ENCODE measurements at regions of chr1 and their contacts with region 1.

Region 1: DNA sequence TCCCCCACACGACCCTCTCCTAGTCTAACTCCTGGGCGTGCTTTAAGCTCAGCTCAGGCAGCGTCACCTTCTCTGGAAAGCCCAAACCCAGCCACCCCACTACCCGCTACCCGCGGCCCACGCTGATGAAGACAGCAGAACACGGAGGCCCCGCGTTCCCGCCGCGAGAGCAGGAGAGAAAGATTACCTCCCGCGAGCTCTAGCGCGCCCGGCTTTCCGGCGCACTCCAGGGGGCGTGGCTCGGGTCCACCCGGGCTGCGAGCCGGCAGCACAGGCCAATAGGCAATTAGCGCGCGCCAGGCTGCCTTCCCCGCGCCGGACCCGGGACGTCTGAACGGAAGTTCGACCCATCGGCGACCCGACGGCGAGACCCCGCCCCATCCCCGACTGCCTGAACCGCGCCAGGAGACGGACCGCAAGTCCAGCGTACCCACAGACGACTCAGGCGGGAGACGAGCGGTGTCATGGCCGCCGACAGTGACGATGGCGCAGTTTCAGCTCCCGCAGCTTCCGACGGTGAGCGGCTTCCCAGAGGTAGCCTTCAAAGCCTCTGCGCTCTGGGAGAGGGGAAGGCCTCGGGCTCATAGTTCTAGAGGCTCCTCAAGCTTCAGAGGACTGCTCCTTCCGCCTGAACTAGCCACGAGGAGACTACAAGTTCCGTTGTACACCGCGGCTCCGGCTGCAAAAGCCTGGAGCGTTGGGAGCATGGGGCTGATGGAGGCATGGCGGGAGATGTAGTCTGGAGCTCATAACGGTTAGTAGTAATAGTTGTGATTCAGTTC is at the starts of genes MUTYH and TOE1:
- DNase-seq: peak; percentile 94
- H3K4me3 Mint-ChIP-seq: peak within 1 kb of the TSS; percentile 99
- H3K27ac Mint-ChIP-seq: peak within 1 kb of the TSS; percentile 100
- H3K4me1 Mint-ChIP-seq: peaks cover 39% of the 10 kb centered on the region
- H3K27me3 Mint-ChIP-seq: no peaks in the 10 kb centered on the region
- total RNA-seq, gene MUTYH: 53.4 and 55.9 TPM in 2 replicates
- total RNA-seq, gene TOE1: 39.1 and 41.4 TPM in 2 replicates

Region 2: GRCh38 chr1:44985747-44986359 is 354.1 kb before region 1 on chr1:
- intact Hi-C with region 1: loop called (anchors 1 kb)
- DNase-seq: no peak
- H3K4me3 Mint-ChIP-seq: peak overlapping the region; percentile 100
- H3K27ac Mint-ChIP-seq: peak overlapping the region; percentile 94
- H3K4me1 Mint-ChIP-seq: peaks cover 21% of the 10 kb centered on the region
- H3K27me3 Mint-ChIP-seq: peaks cover 2% of the 10 kb centered on the region

Region 3: GRCh38 chr1:45326627-45327623 is 13.1 kb before region 1 on chr1 and contains the start of gene HPDL:
- intact Hi-C with region 1: loop called (anchors 1 kb)
- DNase-seq: peak; percentile 35
- H3K4me3 Mint-ChIP-seq: peak within 1 kb of the TSS; percentile 81
- H3K27ac Mint-ChIP-seq: peak within 1 kb of the TSS; percentile 63
- H3K4me1 Mint-ChIP-seq: peaks cover 15% of the 10 kb centered on the region
- H3K27me3 Mint-ChIP-seq: peaks cover 5% of the 10 kb centered on the region
- total RNA-seq, gene HPDL: 31.0 and 34.8 TPM in 2 replicates

Region 4: GRCh38 chr1:45370575-45370974 is 30.6 kb after region 1 on chr1:
- intact Hi-C with region 1: no loop called
- DNase-seq: no peak
- H3K4me3 Mint-ChIP-seq: no peak overlapping the region
- H3K27ac Mint-ChIP-seq: no peak overlapping the region
- H3K4me1 Mint-ChIP-seq: no peaks in the 10 kb centered on the region
- H3K27me3 Mint-ChIP-seq: no peaks in the 10 kb centered on the region

Region 5: GRCh38 chr1:45499415-45499769 is 159.4 kb after region 1 on chr1:
- intact Hi-C with region 1: loop called (anchors 1 kb)
- DNase-seq: no peak
- H3K4me3 Mint-ChIP-seq: peak overlapping the region; percentile 93
- H3K27ac Mint-ChIP-seq: peak overlapping the region; percentile 83
- H3K4me1 Mint-ChIP-seq: peaks cover 37% of the 10 kb centered on the region
- H3K27me3 Mint-ChIP-seq: no peaks in the 10 kb centered on the region

Region 6: GRCh38 chr1:45550401-45551351 is 210.7 kb after region 1 on chr1 and contains the start of gene AKR1A1:
- intact Hi-C with region 1: loop called (anchors 1 kb)
- DNase-seq: peak; percentile 85
- H3K4me3 Mint-ChIP-seq: peak within 1 kb of the TSS; percentile 93
- H3K27ac Mint-ChIP-seq: peak within 1 kb of the TSS; percentile 92
- H3K4me1 Mint-ChIP-seq: peaks cover 29% of the 10 kb centered on the region
- H3K27me3 Mint-ChIP-seq: peaks cover 5% of the 10 kb centered on the region
- total RNA-seq, gene AKR1A1: 192 and 194 TPM in 2 replicates

Region 7: GRCh38 chr1:46247436-46248121 is 907.6 kb after region 1 on chr1 and contains the start of gene RAD54L:
- intact Hi-C with region 1: loop called (anchors 1 kb)
- DNase-seq: peak; percentile 95
- H3K4me3 Mint-ChIP-seq: peak within 1 kb of the TSS; percentile 97
- H3K27ac Mint-ChIP-seq: peak within 1 kb of the TSS; percentile 94
- H3K4me1 Mint-ChIP-seq: peaks cover 39% of the 10 kb centered on the region
- H3K27me3 Mint-ChIP-seq: no peaks in the 10 kb centered on the region
- total RNA-seq, gene RAD54L: 49.7 and 50.2 TPM in 2 replicates

Measured in activated T-helper 1 cell treated with anti-CD3 and anti-CD28 coated beads, Interleukin-12 subunit alpha, Interleukin-12 subunit beta, Interleukin-2, Interleukin-4 antibody, amounts not matched to agents 30 ng/mL and 10 ng/mL and 1 ng/mL, durations not matched to agents 14 hours and 24 hours and 36 hours (primary cell).